Activated CD4-positive, alpha-beta T cell treated with anti-CD3 and anti-CD28 coated beads for 36 hours (primary cell): ENCODE measurements at regions of chr1 and their contacts with region 1.

Region 1: DNA sequence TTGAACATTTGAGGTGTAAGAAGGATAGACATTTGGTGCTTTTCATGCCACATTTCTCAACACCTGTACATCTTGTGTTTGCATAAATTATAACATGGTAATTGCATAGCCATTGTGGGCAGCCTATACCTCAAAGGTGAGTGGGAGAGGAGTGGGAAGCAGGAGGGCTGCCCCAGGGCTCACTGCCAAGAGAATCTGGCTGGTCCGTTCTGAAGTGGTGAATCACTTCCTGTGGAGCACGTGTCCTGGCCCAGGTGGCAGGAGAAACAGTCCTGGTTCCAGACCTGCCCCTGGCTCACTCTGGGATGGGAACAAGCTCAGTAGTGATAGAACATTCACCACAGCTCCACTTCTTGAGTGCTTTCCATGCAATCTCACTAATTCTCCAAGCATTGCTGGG is 11.6 kb upstream of the OLFML2B start:
- DNase-seq: peak; percentile 45
- ATAC-seq: peak; percentile 21
- H3K4me3 Mint-ChIP-seq: no peak overlapping the region
- H3K27ac Mint-ChIP-seq: no peak overlapping the region
- H3K4me1 Mint-ChIP-seq: peaks cover 7% of the 10 kb centered on the region
- H3K27me3 Mint-ChIP-seq: peaks cover 4% of the 10 kb centered on the region

Region 2: DNA sequence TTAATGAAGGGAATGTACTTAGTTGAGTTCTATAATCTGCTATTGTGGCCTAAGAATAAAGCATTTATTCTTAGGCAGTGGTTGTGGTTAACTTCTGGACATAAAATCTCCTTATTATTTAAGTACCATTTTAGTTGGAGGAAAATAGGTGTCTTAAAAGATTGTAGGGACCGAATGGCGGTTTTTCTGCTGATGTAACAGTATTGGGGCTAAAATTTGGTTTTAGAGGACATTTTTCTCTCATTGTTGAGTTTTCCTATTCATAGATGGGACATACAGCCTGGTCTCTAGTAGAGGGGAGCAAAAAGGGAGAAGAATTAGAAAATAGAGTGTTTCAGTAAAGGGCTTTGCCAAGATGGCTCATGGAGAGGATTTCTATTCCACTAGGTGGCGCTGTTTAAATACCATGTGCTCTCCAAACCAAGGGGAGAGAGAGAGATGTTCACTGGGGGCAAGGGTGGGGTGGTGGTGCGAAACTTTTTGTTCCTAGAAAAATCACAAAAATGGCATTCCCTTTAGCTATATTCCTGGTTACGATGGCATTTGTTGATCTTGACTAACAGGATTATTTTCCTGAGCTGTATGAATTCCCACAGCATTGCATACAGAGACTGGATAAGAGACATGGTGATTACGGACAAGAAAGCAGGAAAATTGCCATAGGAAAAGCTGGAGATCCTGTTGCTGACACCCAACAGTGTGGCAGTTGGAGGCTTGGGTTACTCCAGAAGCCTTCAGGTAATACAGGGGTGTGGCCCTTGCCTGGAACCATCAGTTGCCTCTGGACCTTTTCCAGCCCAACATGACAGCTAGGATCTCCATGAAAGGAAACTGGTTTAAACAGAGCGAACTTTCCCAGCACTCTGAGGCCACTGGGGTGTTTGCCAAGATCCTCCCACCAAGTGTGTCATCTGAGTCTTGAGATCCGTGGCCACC is 548.2 kb before region 1 on chr1:
- CTCF ChIA-PET with region 1: no interaction called
- POLR2A ChIA-PET with region 1: no interaction called
- intact Hi-C with region 1: loop called in 1 of 2 experiments (anchors 10 kb)
- DNase-seq: peak; percentile 45
- ATAC-seq: peak; percentile 58
- H3K4me3 Mint-ChIP-seq: no peak overlapping the region
- H3K27ac Mint-ChIP-seq: no peak overlapping the region
- H3K4me1 Mint-ChIP-seq: peaks cover 12% of the 10 kb centered on the region
- H3K27me3 Mint-ChIP-seq: peaks cover 30% of the 10 kb centered on the region

Region 3: GRCh38 chr1:161905269-161905884 is 129.9 kb before region 1 on chr1:
- CTCF ChIA-PET with region 1: interaction called, 4 read pairs
- POLR2A ChIA-PET with region 1: no interaction called
- intact Hi-C with region 1: loop called in 1 of 2 experiments (anchors 5 kb)
- DNase-seq: peak; percentile 56
- ATAC-seq: peak; percentile 70
- H3K4me3 Mint-ChIP-seq: no peak overlapping the region
- H3K27ac Mint-ChIP-seq: no peak overlapping the region
- H3K4me1 Mint-ChIP-seq: peaks cover 28% of the 10 kb centered on the region
- H3K27me3 Mint-ChIP-seq: no peaks in the 10 kb centered on the region

Region 4: GRCh38 chr1:162023547-162024501 is 11.4 kb before region 1 on chr1 and contains the start of gene OLFML2B:
- CTCF ChIA-PET with region 1: interaction called, 13 read pairs
- POLR2A ChIA-PET with region 1: no interaction called
- intact Hi-C with region 1: no loop called
- DNase-seq: peak; percentile 70
- ATAC-seq: peak; percentile 91
- H3K4me3 Mint-ChIP-seq: peak within 1 kb of the TSS; percentile 78
- H3K27ac Mint-ChIP-seq: peak within 1 kb of the TSS; percentile 40
- H3K4me1 Mint-ChIP-seq: peaks cover 4% of the 10 kb centered on the region
- H3K27me3 Mint-ChIP-seq: peaks cover 39% of the 10 kb centered on the region
- total RNA-seq, gene OLFML2B: 0.14 to 0.28 TPM

Region 5: GRCh38 chr1:162056043-162056442 is 20.8 kb after region 1 on chr1:
- CTCF ChIA-PET with region 1: interaction called, 34 read pairs
- POLR2A ChIA-PET with region 1: no interaction called
- intact Hi-C with region 1: no loop called
- DNase-seq: peak; percentile 68
- ATAC-seq: peak; percentile 84
- H3K4me3 Mint-ChIP-seq: no peak overlapping the region
- H3K27ac Mint-ChIP-seq: no peak overlapping the region
- H3K4me1 Mint-ChIP-seq: no peaks in the 10 kb centered on the region
- H3K27me3 Mint-ChIP-seq: peaks cover 2% of the 10 kb centered on the region